CD8-positive, alpha-beta T cell (primary cell): ENCODE measurements at regions of chr11 and their contacts with region 1.

Region 1: DNA sequence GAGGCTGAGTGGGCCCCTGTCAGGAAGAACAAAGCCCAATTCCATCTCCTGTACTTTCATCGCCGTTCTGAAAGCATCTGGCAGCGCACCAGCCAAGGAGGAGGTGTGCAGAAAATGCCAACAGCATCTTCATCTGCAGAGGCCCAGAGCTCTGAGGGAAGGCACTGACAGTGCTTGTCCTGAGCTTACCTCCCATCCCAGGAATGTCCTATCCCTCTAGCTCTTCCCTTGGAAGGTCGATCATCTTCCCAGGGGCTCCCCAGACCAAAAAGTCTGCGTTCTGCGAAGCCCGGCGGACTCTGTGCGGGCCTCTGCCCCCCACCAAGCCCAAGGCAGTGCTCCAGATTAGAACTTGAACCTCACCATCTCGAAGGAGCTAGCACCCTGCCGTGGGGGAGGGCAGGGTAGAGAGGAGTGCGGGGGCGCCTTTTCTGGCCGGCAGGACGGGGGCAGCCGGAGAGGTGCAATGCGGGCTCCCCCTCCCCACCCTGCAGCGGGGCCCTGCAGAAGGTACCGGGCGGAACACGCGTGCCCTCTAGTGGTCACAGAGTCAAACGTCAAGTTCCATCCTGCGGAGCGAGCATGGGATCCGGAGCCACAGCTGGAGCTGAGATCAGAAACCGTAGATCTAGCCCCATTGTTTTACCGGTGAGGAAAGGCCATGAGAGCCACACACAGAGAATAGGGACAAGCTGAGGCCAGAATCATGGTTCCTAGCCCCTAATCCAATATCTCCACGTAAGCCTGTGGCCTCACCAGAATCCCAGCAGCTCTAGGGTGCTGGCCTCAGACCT is 5.0 kb downstream of the SCN2B start:
- DNase-seq: peak; percentile 45 to 83 (median 72)
- ATAC-seq: peak; percentile 96
- H3K4me3 ChIP-seq: no peak overlapping the region
- H3K4me3 Mint-ChIP-seq: no peak overlapping the region
- H3K27ac ChIP-seq: no peak overlapping the region
- H3K27ac Mint-ChIP-seq: no peak overlapping the region
- H3K4me1 ChIP-seq: peaks cover 8% of the 10 kb centered on the region
- H3K4me1 Mint-ChIP-seq: peaks cover 2% of the 10 kb centered on the region
- H3K27me3 ChIP-seq: no peaks in the 10 kb centered on the region
- H3K27me3 Mint-ChIP-seq: peaks cover 3% of the 10 kb centered on the region
- CTCF ChIP-seq: peak; percentile 95

Region 2: DNA sequence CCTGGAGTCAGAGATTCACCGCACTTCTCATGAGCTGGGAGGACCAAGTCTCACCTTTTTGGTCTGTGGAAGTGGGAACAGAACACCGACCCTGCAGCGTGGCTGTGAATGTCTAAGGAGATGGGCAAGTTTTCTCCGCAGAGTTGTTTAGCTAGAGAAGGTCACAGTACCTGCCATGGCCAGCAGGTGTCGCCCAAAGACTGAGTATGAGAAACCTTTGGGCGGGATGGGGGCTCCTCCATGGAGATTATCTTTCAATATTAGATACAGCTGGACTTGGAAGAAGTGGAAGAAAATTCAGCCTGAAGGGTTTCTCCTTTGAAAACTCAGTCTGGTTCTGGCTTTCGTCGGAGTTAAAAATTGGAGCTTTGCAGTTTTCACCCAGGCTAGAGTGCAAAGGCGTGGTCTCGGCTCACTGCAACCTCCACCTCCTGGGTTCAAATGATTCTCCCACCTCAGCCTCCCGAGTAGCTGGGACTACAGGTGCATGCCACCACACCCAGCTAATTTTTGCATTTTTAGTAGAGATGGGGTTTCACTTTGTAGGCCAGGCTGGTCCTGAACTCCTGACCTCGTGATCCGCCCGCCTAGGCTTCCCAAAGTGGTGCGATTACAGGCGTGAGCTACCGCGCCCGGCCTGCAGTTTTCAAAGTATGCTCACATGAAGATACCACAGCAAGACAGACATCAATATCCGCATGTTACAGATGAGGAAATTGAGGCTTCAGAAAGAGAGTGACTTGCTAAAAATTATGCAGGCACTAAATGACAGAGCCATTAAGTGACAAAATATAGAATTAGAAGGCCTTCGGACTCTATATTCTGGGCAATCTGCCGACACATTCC is 363.8 kb before region 1 on chr11:
- CTCF ChIA-PET with region 1: interaction called, 14 read pairs
- POLR2A ChIA-PET with region 1: no interaction called
- intact Hi-C with region 1: loop called (anchors 2 to 5 kb)
- DNase-seq: peak; percentile 58 to 85 (median 78)
- ATAC-seq: peak; percentile 89
- H3K4me3 ChIP-seq: no peak overlapping the region
- H3K4me3 Mint-ChIP-seq: no peak overlapping the region
- H3K27ac ChIP-seq: no peak overlapping the region
- H3K27ac Mint-ChIP-seq: no peak overlapping the region
- H3K4me1 ChIP-seq: peaks cover 4% of the 10 kb centered on the region
- H3K4me1 Mint-ChIP-seq: peaks cover 7% of the 10 kb centered on the region
- H3K27me3 ChIP-seq: no peaks in the 10 kb centered on the region
- H3K27me3 Mint-ChIP-seq: no peaks in the 10 kb centered on the region
- CTCF ChIP-seq: peak; percentile 94

Region 3: GRCh38 chr11:118027691-118028090 is 143.8 kb before region 1 on chr11:
- CTCF ChIA-PET with region 1: no interaction called
- POLR2A ChIA-PET with region 1: no interaction called
- intact Hi-C with region 1: no loop called
- DNase-seq: no peak
- ATAC-seq: no peak
- H3K4me3 ChIP-seq: no peak overlapping the region
- H3K4me3 Mint-ChIP-seq: no peak overlapping the region
- H3K27ac ChIP-seq: no peak overlapping the region
- H3K27ac Mint-ChIP-seq: no peak overlapping the region
- H3K4me1 ChIP-seq: peaks cover 11% of the 10 kb centered on the region
- H3K4me1 Mint-ChIP-seq: peaks cover 35% of the 10 kb centered on the region
- H3K27me3 ChIP-seq: no peaks in the 10 kb centered on the region
- H3K27me3 Mint-ChIP-seq: no peaks in the 10 kb centered on the region
- CTCF ChIP-seq: no peak

Region 4: GRCh38 chr11:118076754-118077281 is 94.6 kb before region 1 on chr11 and contains the start of gene TMPRSS4:
- CTCF ChIA-PET with region 1: no interaction called
- POLR2A ChIA-PET with region 1: no interaction called
- intact Hi-C with region 1: no loop called
- DNase-seq: no peak
- ATAC-seq: no peak
- H3K4me3 ChIP-seq: no peak within 1 kb of the TSS
- H3K4me3 Mint-ChIP-seq: no peak within 1 kb of the TSS
- H3K27ac ChIP-seq: no peak within 1 kb of the TSS
- H3K27ac Mint-ChIP-seq: no peak within 1 kb of the TSS
- H3K4me1 ChIP-seq: no peaks in the 10 kb centered on the region
- H3K4me1 Mint-ChIP-seq: peaks cover 4% of the 10 kb centered on the region
- H3K27me3 ChIP-seq: no peaks in the 10 kb centered on the region
- H3K27me3 Mint-ChIP-seq: peaks cover 6% of the 10 kb centered on the region
- CTCF ChIP-seq: no peak
- total RNA-seq, gene TMPRSS4: not detected

Region 5: DNA sequence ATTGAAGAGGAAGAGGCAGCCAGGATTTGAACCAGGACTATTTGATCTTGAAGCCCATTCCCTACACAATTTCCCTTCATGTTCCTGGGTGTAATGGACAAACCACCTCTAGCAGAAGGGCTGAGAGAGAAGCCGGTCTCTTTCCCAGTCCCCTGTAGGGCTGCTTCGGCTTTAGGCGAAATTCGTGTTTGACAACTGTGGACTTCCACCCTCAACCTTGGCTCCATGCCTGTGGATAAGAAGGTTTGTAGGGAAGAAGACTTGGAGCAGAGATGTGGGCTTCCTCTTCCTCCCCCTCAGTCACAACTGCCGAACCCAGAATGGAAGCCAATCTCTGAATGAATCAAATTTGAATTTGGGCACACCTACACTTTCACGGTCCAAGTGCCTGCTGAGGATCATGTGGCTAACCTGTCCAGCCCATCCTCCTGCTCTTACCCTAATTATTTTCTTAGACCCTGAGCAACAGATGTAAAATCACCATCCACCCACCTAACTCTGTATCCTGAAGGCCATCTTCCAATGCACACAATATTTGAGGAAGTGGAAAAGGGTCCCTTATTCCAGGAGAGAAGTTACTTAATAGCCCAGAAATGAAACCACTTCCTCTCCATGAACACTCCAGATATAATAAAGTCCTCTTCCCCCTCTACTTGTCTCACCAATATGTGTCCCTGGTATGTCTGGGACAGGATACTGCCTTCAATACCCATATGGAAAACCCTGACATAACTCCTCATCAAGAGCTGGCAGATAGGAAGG is 15.1 kb after region 1 on chr11:
- CTCF ChIA-PET with region 1: interaction called, 43 read pairs
- POLR2A ChIA-PET with region 1: no interaction called
- intact Hi-C with region 1: no loop called
- DNase-seq: no peak
- ATAC-seq: no peak
- H3K4me3 ChIP-seq: no peak overlapping the region
- H3K4me3 Mint-ChIP-seq: no peak overlapping the region
- H3K27ac ChIP-seq: no peak overlapping the region
- H3K27ac Mint-ChIP-seq: no peak overlapping the region
- H3K4me1 ChIP-seq: no peaks in the 10 kb centered on the region
- H3K4me1 Mint-ChIP-seq: no peaks in the 10 kb centered on the region
- H3K27me3 ChIP-seq: peaks cover 0 to 2% of the 10 kb centered on the region in 2 experiments
- H3K27me3 Mint-ChIP-seq: peaks cover 16% of the 10 kb centered on the region
- CTCF ChIP-seq: no peak

Region 6: GRCh38 chr11:118227865-118228785 is 56.7 kb after region 1 on chr11:
- CTCF ChIA-PET with region 1: no interaction called
- POLR2A ChIA-PET with region 1: no interaction called
- intact Hi-C with region 1: no loop called
- DNase-seq: peak in 3 of 9 experiments; percentile 19 to 82 (median 77)
- ATAC-seq: peak; percentile 13
- H3K4me3 ChIP-seq: peak overlapping the region in 1 of 2 experiments; percentile 1
- H3K4me3 Mint-ChIP-seq: peak overlapping the region; percentile 48
- H3K27ac ChIP-seq: peak overlapping the region; percentile 8 to 46
- H3K27ac Mint-ChIP-seq: no peak overlapping the region
- H3K4me1 ChIP-seq: peaks cover 66% of the 10 kb centered on the region
- H3K4me1 Mint-ChIP-seq: peaks cover 49% of the 10 kb centered on the region
- H3K27me3 ChIP-seq: no peaks in the 10 kb centered on the region
- H3K27me3 Mint-ChIP-seq: no peaks in the 10 kb centered on the region
- CTCF ChIP-seq: no peak

Region 7: GRCh38 chr11:118263695-118264567 is 92.5 kb after region 1 on chr11 and contains the start of gene MPZL2:
- CTCF ChIA-PET with region 1: interaction called, 12 read pairs
- POLR2A ChIA-PET with region 1: no interaction called
- intact Hi-C with region 1: no loop called
- DNase-seq: peak in 3 of 9 experiments; percentile 35 to 61 (median 40)
- ATAC-seq: peak; percentile 54
- H3K4me3 ChIP-seq: peak within 1 kb of the TSS; percentile 4 to 58
- H3K4me3 Mint-ChIP-seq: peak within 1 kb of the TSS; percentile 82
- H3K27ac ChIP-seq: no peak within 1 kb of the TSS
- H3K27ac Mint-ChIP-seq: peak within 1 kb of the TSS; percentile 83
- H3K4me1 ChIP-seq: peaks cover 38% of the 10 kb centered on the region
- H3K4me1 Mint-ChIP-seq: peaks cover 44% of the 10 kb centered on the region
- H3K27me3 ChIP-seq: no peaks in the 10 kb centered on the region
- H3K27me3 Mint-ChIP-seq: no peaks in the 10 kb centered on the region
- CTCF ChIP-seq: no peak
- total RNA-seq, gene MPZL2: 1.2 to 1.4 TPM

Region 8: DNA sequence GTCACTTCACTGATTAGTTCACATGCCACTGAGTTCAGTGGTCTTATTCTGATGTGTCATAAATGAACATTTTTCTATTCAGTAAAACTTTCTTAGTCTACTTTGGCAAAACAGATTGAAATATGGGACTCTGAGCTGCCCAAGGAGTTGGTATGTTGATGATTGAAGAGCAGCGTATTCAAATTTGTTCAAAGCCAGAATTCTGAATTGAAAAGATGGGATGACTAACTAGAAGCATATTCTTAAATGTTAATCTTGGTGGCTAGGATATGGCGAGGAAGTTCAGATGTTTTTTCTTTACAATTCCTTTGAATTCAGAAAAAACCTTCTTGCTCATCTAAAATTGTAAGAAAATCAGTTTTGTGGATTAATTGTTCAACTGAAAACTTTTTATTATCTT is 299.6 kb after region 1 on chr11:
- CTCF ChIA-PET with region 1: no interaction called
- POLR2A ChIA-PET with region 1: no interaction called
- intact Hi-C with region 1: no loop called
- DNase-seq: no peak
- ATAC-seq: no peak
- H3K4me3 ChIP-seq: no peak overlapping the region
- H3K4me3 Mint-ChIP-seq: no peak overlapping the region
- H3K27ac ChIP-seq: no peak overlapping the region
- H3K27ac Mint-ChIP-seq: peak overlapping the region; percentile 23
- H3K4me1 ChIP-seq: peaks cover 20% of the 10 kb centered on the region
- H3K4me1 Mint-ChIP-seq: peaks cover 37% of the 10 kb centered on the region
- H3K27me3 ChIP-seq: no peaks in the 10 kb centered on the region
- H3K27me3 Mint-ChIP-seq: no peaks in the 10 kb centered on the region
- CTCF ChIP-seq: no peak